ENCODE measurements at regions of chr1 and their contacts with region 1.

Region 1: GRCh38 chr1:179809506-179810366 is 66.6 kb downstream of the FAM163A start:
- DNase-seq: peak; percentile 56
- ATAC-seq: peak; percentile 75
- H3K4me3 ChIP-seq: no peak overlapping the region
- H3K27ac ChIP-seq: no peak overlapping the region
- H3K4me1 ChIP-seq: peaks cover 3 to 20% of the 10 kb centered on the region in 2 experiments; a peak in 3 of 4 replicates
- H3K27me3 ChIP-seq: no peaks in the 10 kb centered on the region
- CTCF ChIP-seq: peak; percentile 79 to 94 (median 89)
- POLR2A ChIP-seq: no peak
- RAD21 ChIP-seq: peak; percentile 74

Region 2: GRCh38 chr1:179251675-179252074 is 558.1 kb before region 1 on chr1:
- CTCF ChIA-PET with region 1: interaction called, 22 read pairs
- POLR2A ChIA-PET with region 1: no interaction called
- RAD21 ChIA-PET with region 1: interaction called in 1 of 2 experiments, 5 read pairs
- intact Hi-C with region 1: loop called (anchors 10 kb)
- DNase-seq: no peak
- ATAC-seq: peak; percentile 79
- H3K4me3 ChIP-seq: no peak overlapping the region
- H3K27ac ChIP-seq: no peak overlapping the region
- H3K4me1 ChIP-seq: no peaks in the 10 kb centered on the region
- H3K27me3 ChIP-seq: no peaks in the 10 kb centered on the region
- CTCF ChIP-seq: peak; percentile 28 to 51 (median 41); a peak in 4 of 6 replicates
- POLR2A ChIP-seq: no peak
- RAD21 ChIP-seq: peak; percentile 80

Region 3: GRCh38 chr1:179794669-179795068 is 15.1 kb before region 1 on chr1:
- CTCF ChIA-PET with region 1: interaction called, 18 read pairs
- POLR2A ChIA-PET with region 1: no interaction called
- RAD21 ChIA-PET with region 1: no interaction called
- intact Hi-C with region 1: no loop called
- DNase-seq: no peak
- ATAC-seq: no peak
- H3K4me3 ChIP-seq: no peak overlapping the region
- H3K27ac ChIP-seq: no peak overlapping the region
- H3K4me1 ChIP-seq: no peaks in the 10 kb centered on the region
- H3K27me3 ChIP-seq: no peaks in the 10 kb centered on the region
- CTCF ChIP-seq: no peak
- POLR2A ChIP-seq: no peak
- RAD21 ChIP-seq: no peak

Region 4: DNA sequence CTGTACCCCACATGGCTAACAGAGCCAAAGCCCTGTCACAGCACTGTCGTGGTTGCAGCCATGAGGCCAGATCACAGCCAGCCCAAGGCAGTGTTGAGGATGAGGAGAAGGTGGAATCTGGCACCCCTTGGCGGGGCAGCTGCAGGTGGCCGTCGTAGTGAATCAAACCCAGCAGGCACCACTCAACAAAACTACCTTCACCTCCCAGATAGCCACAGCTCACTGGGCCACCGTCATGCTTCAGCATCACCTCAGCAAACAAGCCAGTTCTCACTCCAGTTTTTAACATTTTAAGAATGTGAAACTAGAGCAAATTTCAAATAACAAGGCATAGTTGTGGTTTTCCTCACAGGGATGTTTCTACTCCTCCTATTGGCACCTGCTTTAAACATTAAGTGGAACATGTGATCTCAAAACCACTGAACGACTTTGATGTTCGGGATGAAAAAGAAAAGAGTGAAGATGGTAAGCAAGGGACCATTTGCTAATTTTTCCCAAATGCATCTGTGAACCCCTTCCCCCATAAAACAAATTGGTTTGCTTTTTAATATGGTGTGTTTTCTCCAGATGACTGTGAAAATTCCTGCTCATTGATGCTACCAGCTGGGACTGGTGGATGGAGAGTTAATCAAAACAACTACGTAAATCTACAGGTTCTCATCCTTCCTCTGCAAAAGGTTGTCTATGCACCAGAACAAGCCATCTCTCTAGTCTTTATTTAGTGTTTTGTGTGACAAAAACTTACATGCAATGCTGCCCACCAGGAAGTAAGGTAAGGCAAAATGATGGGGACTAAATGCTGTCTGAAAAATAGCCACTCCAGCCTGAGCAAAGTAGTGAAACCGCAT is 22.3 kb after region 1 on chr1:
- CTCF ChIA-PET with region 1: interaction called, 12 read pairs
- POLR2A ChIA-PET with region 1: no interaction called
- RAD21 ChIA-PET with region 1: no interaction called
- intact Hi-C with region 1: no loop called
- DNase-seq: no peak
- ATAC-seq: no peak
- H3K4me3 ChIP-seq: no peak overlapping the region
- H3K27ac ChIP-seq: no peak overlapping the region
- H3K4me1 ChIP-seq: peaks cover 0 to 6% of the 10 kb centered on the region in 2 experiments; a peak in 1 of 4 replicates
- H3K27me3 ChIP-seq: no peaks in the 10 kb centered on the region
- CTCF ChIP-seq: no peak
- POLR2A ChIP-seq: no peak
- RAD21 ChIP-seq: no peak

Region 5: GRCh38 chr1:180168786-180169639 is 359.3 kb after region 1 on chr1:
- CTCF ChIA-PET with region 1: interaction called, 19 read pairs
- POLR2A ChIA-PET with region 1: no interaction called
- RAD21 ChIA-PET with region 1: interaction called in 1 of 2 experiments, 5 read pairs
- intact Hi-C with region 1: loop called (anchors 1 kb)
- DNase-seq: no peak
- ATAC-seq: peak; percentile 71
- H3K4me3 ChIP-seq: no peak overlapping the region
- H3K27ac ChIP-seq: peak overlapping the region; percentile 70
- H3K4me1 ChIP-seq: peaks cover 29 to 46% of the 10 kb centered on the region in 2 experiments
- H3K27me3 ChIP-seq: no peaks in the 10 kb centered on the region
- CTCF ChIP-seq: peak; percentile 28 to 88 (median 71); a peak in 5 of 6 replicates
- POLR2A ChIP-seq: no peak
- RAD21 ChIP-seq: peak; percentile 64